ENCODE measurements at regions of chr17 and their contacts with region 1.

Region 1: DNA sequence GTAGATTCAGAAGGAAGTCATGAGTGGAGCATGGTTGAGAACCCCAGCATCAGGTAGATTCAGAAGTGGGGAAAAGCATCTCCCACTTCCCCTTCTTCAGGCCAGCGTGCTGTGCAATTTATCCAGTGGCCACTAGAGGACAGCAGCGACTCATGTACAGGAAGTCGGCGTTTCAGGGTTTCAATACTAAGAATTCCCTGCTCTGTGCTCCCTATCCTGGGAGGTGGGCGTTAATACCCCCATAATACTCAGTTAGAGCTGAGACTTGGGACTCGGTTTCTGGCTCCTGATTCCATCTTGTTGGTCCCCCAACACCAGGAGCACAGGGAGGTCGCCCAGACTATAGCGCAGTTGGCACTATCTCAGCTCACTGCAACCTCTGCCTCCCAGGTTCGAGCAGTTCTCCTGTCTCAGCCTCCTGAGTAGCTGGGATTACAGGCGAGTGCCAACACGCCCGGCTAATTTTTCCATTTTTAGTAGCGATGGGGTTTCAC is 75.3 kb upstream of the AMZ2 start:
- DNase-seq: peak; percentile 18 to 71
- ATAC-seq: peak; percentile 84 to 92
- H3K4me3 ChIP-seq: no peak overlapping the region
- H3K27ac ChIP-seq: no peak overlapping the region
- H3K4me1 ChIP-seq: no peaks in the 10 kb centered on the region
- CTCF ChIP-seq: peak; percentile 99
- EP300 ChIP-seq: no peak
- POLR2A ChIP-seq: no peak
- RAD21 ChIP-seq: peak; percentile 96 to 98

Region 2: GRCh38 chr17:67733371-67733940 is 439.1 kb before region 1 on chr17:
- CTCF ChIA-PET with region 1: no interaction called
- POLR2A ChIA-PET with region 1: no interaction called
- DNase-seq: no peak
- ATAC-seq: no peak
- H3K4me3 ChIP-seq: no peak overlapping the region
- H3K27ac ChIP-seq: no peak overlapping the region
- H3K4me1 ChIP-seq: no peaks in the 10 kb centered on the region
- CTCF ChIP-seq: no peak
- EP300 ChIP-seq: no peak
- POLR2A ChIP-seq: no peak
- RAD21 ChIP-seq: no peak

Region 3: GRCh38 chr17:68161644-68162428 is 10.7 kb before region 1 on chr17:
- CTCF ChIA-PET with region 1: interaction called, 45 read pairs
- POLR2A ChIA-PET with region 1: no interaction called
- DNase-seq: no peak
- ATAC-seq: 0 out of 6 replicates have a peak, but pooled peaks of 1 of the 2 experiments have one; percentile 33
- H3K4me3 ChIP-seq: no peak overlapping the region
- H3K27ac ChIP-seq: no peak overlapping the region
- H3K4me1 ChIP-seq: no peaks in the 10 kb centered on the region
- CTCF ChIP-seq: no peak
- EP300 ChIP-seq: no peak
- POLR2A ChIP-seq: no peak
- RAD21 ChIP-seq: no peak

Region 4: GRCh38 chr17:68196944-68197595 is 24.6 kb after region 1 on chr17:
- CTCF ChIA-PET with region 1: interaction called, 135 read pairs
- POLR2A ChIA-PET with region 1: interaction called, 3 read pairs
- DNase-seq: peak in 1 of 2 experiments; percentile 47
- ATAC-seq: peak; percentile 8 to 27; a peak in 3 of 6 replicates
- H3K4me3 ChIP-seq: peak overlapping the region; percentile 43
- H3K27ac ChIP-seq: no peak overlapping the region
- H3K4me1 ChIP-seq: peaks cover 44% of the 10 kb centered on the region
- CTCF ChIP-seq: no peak
- EP300 ChIP-seq: no peak
- POLR2A ChIP-seq: no peak
- RAD21 ChIP-seq: no peak

Region 5: GRCh38 chr17:68327823-68328570 is 155.5 kb after region 1 on chr17:
- CTCF ChIA-PET with region 1: no interaction called
- POLR2A ChIA-PET with region 1: no interaction called
- DNase-seq: no peak
- ATAC-seq: peak in 1 of 2 experiments; percentile 25; a peak in 1 of 6 replicates
- H3K4me3 ChIP-seq: no peak overlapping the region
- H3K27ac ChIP-seq: no peak overlapping the region
- H3K4me1 ChIP-seq: no peaks in the 10 kb centered on the region
- CTCF ChIP-seq: no peak
- EP300 ChIP-seq: no peak
- POLR2A ChIP-seq: no peak
- RAD21 ChIP-seq: no peak

Region 6: GRCh38 chr17:68441064-68441770 is 268.7 kb after region 1 on chr17:
- CTCF ChIA-PET with region 1: interaction called, 17 read pairs
- POLR2A ChIA-PET with region 1: no interaction called
- DNase-seq: no peak
- ATAC-seq: no peak
- H3K4me3 ChIP-seq: no peak overlapping the region
- H3K27ac ChIP-seq: no peak overlapping the region
- H3K4me1 ChIP-seq: 0 out of 3 replicates have a peak, but pooled peaks cover under 1% of the 10 kb centered on the region
- CTCF ChIP-seq: no peak
- EP300 ChIP-seq: no peak
- POLR2A ChIP-seq: no peak
- RAD21 ChIP-seq: no peak

Region 7: DNA sequence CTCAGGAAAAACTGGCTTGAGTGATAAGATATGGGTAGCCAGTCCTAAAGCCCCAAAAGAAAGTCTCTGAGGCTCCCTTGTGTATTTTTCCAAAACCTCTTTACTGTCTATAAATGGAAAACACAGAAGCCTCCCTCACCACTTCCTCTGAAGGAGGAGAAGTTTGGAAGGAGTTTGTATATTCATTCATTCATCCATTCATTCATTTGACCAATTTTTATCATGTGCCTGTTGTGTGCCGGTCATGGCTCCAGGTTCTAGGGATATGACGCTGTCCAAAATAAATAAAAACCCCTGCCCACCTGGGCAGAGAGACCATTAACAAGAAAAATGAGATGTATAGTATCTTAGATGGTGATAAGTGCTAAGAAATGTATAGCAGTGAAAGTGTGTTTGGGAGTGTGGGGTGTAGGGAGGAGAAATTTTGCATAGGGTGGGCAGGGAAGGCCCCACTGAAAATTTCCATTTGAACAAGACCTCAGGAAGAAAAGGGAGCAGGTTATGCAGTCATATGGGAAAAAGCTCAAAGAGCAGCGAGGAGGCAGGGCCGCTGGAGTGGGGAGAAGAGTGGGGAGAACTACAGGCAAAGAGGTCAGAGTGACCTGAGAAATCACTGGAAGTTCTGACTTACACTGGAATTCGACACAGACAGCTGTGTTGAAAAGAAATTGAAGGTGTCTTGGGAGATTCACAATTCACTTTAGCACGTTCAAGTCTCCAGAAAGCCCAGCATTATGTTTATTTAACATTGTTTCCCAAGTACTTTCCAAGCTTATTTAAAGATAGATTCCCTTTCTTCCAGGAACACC is 290.9 kb after region 1 on chr17:
- CTCF ChIA-PET with region 1: interaction called, 59 read pairs
- POLR2A ChIA-PET with region 1: no interaction called
- DNase-seq: no peak
- ATAC-seq: no peak; a peak in 1 of 6 replicates
- H3K4me3 ChIP-seq: no peak overlapping the region
- H3K27ac ChIP-seq: no peak overlapping the region
- H3K4me1 ChIP-seq: peaks cover 7% of the 10 kb centered on the region; the same call in 2 of the 3 replicates
- CTCF ChIP-seq: no peak; the same call in 2 of the 3 replicates
- EP300 ChIP-seq: no peak
- POLR2A ChIP-seq: no peak
- RAD21 ChIP-seq: no peak